Activated CD4-positive, alpha-beta T cell treated with anti-CD3 and anti-CD28 coated beads for 36 hours (primary cell): ENCODE measurements at regions of chr6 and their contacts with region 1.

Region 1: GRCh38 chr6:83615025-83615999 is 93.6 kb downstream of the SNAP91 start:
- DNase-seq: no peak
- ATAC-seq: no peak
- H3K4me3 Mint-ChIP-seq: no peak overlapping the region
- H3K27ac Mint-ChIP-seq: no peak overlapping the region
- H3K4me1 Mint-ChIP-seq: no peaks in the 10 kb centered on the region
- H3K27me3 Mint-ChIP-seq: peaks cover 5% of the 10 kb centered on the region

Region 2: DNA sequence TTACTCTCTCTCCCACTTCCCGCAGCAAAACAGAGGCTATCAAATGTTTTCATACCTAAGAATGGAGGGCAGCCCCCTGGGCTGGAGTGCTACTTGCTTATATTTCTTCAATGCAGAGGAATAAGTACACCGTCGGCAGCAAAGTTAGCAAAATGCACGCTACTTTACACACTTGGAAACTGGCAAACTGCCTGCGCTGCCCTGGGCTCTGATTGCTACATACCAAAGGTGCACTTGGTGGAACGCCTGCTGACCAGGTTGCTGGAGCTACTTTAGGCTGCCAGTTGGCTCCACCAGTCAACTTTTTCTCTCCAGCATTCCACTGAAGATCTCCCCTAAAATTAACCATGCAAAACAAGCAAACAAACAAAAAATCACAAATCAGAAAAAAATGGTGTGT is 40.5 kb before region 1 on chr6:
- CTCF ChIA-PET with region 1: no interaction called
- POLR2A ChIA-PET with region 1: no interaction called
- intact Hi-C with region 1: no loop called
- DNase-seq: no peak
- ATAC-seq: no peak
- H3K4me3 Mint-ChIP-seq: no peak overlapping the region
- H3K27ac Mint-ChIP-seq: no peak overlapping the region
- H3K4me1 Mint-ChIP-seq: no peaks in the 10 kb centered on the region
- H3K27me3 Mint-ChIP-seq: no peaks in the 10 kb centered on the region

Region 3: GRCh38 chr6:83597511-83597910 is 17.8 kb before region 1 on chr6:
- CTCF ChIA-PET with region 1: interaction called, 10 read pairs
- POLR2A ChIA-PET with region 1: no interaction called
- intact Hi-C with region 1: no loop called
- DNase-seq: no peak
- ATAC-seq: no peak
- H3K4me3 Mint-ChIP-seq: no peak overlapping the region
- H3K27ac Mint-ChIP-seq: no peak overlapping the region
- H3K4me1 Mint-ChIP-seq: no peaks in the 10 kb centered on the region
- H3K27me3 Mint-ChIP-seq: peaks cover 2% of the 10 kb centered on the region

Region 4: DNA sequence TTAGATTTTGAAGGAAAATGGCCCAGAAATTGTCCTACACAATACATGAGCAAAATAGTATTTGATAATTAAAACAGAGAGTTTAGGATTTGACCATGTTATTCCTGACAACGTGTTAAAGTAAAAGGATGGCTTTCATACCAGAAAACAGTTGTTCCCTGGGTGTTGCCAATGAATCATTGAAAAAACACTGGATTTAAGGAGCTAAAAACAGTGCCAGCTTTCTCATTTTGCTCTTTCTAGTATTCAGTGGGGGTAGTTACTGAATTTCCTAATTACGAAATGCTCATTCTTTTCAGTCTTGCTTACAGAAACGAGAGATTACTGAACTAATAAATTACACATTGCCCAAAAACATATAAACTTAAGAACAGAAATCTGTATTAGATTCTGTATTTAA is 120.1 kb after region 1 on chr6:
- CTCF ChIA-PET with region 1: no interaction called
- POLR2A ChIA-PET with region 1: no interaction called
- intact Hi-C with region 1: no loop called
- DNase-seq: no peak
- ATAC-seq: no peak
- H3K4me3 Mint-ChIP-seq: no peak overlapping the region
- H3K27ac Mint-ChIP-seq: no peak overlapping the region
- H3K4me1 Mint-ChIP-seq: no peaks in the 10 kb centered on the region
- H3K27me3 Mint-ChIP-seq: no peaks in the 10 kb centered on the region

Region 5: DNA sequence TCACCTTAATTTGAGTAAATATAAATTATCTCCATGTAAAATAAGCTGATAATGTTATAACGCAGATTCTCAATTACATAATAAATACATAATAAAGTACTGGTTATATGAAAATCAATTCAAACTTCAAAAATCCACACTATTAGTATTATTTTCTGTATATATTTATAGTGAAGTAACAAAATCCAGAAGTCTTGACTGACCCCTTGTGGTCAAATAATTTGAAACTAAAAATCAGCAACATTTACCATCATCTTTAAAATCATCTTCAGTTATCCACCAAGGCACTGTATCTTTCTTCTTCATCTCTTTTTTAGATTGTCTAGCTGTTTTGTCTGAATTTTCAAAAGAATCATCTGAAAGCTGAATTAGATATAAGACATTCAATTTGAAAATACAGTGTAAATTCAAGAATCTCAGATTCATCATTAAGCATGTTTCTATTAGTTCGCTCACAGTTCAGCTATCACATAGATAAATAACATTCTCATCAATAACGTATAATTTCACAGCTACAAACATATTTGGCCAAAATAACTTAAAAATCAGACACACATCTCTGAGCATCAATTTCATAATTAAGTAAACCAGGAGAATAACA is 605.6 kb after region 1 on chr6:
- CTCF ChIA-PET with region 1: no interaction called
- POLR2A ChIA-PET with region 1: no interaction called
- intact Hi-C with region 1: loop called (anchors 5 to 10 kb)
- DNase-seq: no peak
- ATAC-seq: no peak
- H3K4me3 Mint-ChIP-seq: no peak overlapping the region
- H3K27ac Mint-ChIP-seq: no peak overlapping the region
- H3K4me1 Mint-ChIP-seq: peaks cover 7% of the 10 kb centered on the region
- H3K27me3 Mint-ChIP-seq: no peaks in the 10 kb centered on the region